AG04449 (cell line): ENCODE measurements at regions of chr2 and their contacts with region 1.

Region 1: DNA sequence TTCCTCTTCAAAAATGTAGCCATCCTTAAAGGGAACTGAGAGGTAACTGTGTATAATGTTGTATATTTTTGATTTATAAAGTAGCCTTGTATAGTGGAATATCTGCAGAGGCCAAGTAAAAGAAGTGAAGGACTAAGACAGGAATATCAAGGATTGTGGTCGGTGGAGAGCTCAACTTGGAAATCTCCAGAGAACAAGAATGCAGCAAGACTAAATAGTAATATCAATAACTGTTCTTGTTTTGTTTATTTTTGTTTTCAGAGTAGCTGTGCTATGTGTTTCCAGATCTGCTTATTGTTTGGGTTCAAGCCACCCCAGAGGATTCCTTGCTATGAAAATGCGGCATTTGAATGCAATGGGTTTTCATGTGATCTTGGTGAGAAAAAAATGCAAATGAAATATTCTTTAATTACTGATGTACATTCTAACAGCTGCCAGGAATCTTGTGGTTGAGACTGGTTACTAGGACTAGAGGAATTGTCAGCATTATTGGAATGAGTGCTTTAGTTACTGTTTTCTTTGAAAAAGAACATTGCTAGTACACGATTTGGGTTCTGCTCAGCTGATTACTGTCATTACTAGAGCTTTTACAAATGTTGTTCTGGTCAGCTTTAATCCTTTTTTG is 25.0 kb downstream of the FASTKD2 start:
- DNase-seq: peak; percentile 54
- H3K4me3 ChIP-seq: no peak overlapping the region
- CTCF ChIP-seq: no peak

Region 2: DNA sequence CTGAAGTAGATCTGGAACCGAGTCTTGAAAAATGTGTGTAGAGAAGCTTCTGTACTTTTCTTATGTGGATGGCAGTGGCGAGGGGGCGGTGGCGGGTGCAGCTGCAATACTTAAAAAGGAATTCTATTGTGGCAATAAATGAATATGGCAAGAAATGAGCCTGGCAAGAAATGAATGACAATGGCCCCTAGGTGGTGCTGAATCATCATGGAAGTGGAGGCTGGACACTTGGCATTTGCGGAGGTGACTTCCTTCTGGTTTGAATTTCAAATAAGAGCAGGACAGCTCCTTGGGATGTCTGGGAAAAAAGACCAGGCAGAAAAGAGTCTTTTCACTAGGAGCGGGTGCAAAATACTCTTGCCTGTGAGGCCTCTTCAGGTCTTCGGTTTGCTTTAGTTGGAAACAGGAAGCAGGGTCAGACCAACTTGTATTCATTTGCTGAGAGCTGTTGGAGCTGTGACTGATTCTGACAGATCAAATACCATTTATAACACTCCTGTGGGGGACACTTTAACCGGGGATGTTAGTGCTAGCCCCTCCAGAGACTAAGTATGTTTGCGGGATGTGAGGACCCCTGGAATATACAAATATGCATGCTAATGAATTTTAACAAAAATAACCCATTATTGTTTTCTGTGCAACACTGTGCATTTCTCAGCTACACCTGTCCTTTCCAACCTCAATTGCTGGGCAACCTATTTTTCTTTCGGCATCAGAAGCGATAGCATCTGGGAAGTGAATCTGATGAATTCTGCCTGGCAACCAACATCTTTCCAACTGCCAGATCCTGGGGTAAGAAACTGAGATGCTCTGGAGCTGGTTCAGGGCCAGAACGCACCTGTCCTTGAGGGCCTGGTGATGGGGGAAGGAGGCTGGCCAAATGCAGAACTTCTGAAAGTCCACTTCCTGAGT is 10.3 kb after region 1 on chr2:
- CTCF ChIA-PET with region 1: interaction called, 50 read pairs
- POLR2A ChIA-PET with region 1: no interaction called
- DNase-seq: peak; percentile 38
- H3K4me3 ChIP-seq: no peak overlapping the region
- CTCF ChIP-seq: peak; percentile 68

Region 3: DNA sequence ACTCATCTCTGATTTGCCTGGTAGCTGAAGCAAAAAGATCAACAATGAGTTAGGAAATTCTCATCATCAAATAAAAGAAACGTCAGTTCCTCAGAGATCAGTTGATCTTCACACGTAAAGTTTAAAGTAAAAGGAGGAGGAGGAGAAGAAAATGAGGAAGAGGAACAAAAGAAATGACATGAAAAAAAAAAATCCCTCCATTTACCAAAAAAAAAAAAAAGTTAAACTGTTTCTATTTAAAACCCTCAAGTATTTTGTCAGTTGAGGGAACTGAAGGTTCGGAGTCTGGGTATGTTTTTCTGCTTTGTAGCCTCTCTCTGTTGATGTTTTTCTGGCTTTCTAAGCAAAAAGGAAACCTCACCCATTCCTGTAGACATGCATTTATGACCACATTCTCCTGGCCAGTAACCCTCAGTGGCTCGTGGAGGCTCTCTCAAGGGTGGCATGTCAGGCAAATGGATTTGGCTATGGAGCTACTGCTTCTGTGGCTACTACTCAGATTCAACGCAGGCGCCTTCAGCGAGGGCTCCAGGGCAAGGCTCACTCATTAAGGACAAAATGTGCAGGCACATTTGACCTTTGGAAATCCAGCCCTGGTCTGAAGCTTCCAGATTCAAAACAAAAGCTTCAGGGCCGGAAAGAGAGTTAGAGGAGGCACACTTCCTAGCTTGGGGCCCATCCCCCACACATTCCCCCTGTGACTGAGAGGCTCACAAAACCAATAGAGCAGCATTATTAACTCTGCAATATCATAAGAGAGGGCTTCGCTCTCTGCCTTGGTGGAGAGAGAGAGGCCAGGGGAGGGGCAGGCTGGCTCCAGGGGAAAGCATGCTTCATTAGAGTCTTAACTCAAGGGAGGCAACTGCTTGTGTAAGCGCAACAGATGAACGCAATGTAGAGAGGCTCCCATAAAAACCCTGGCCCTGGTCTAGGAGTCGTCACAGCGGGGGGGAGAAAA is 353.1 kb after region 1 on chr2:
- CTCF ChIA-PET with region 1: no interaction called
- POLR2A ChIA-PET with region 1: no interaction called
- DNase-seq: no peak
- H3K4me3 ChIP-seq: no peak overlapping the region
- CTCF ChIP-seq: no peak